ENCODE measurements at regions of chr3 and their contacts with region 1.

Region 1: GRCh38 chr3:53114011-53114400 is 16.2 kb downstream of the RFT1 start:
- DNase-seq: no peak
- H3K4me3 ChIP-seq: no peak overlapping the region
- CTCF ChIP-seq: peak; percentile 92

Region 2: GRCh38 chr3:52792961-52793695 is 320.9 kb before region 1 on chr3:
- CTCF ChIA-PET with region 1: no interaction called
- POLR2A ChIA-PET with region 1: no interaction called
- DNase-seq: no peak
- H3K4me3 ChIP-seq: no peak overlapping the region
- CTCF ChIP-seq: no peak

Region 3: GRCh38 chr3:53102601-53103147 is 11.3 kb before region 1 on chr3:
- CTCF ChIA-PET with region 1: interaction called, 27 read pairs
- POLR2A ChIA-PET with region 1: no interaction called
- DNase-seq: no peak
- H3K4me3 ChIP-seq: no peak overlapping the region
- CTCF ChIP-seq: no peak

Region 4: DNA sequence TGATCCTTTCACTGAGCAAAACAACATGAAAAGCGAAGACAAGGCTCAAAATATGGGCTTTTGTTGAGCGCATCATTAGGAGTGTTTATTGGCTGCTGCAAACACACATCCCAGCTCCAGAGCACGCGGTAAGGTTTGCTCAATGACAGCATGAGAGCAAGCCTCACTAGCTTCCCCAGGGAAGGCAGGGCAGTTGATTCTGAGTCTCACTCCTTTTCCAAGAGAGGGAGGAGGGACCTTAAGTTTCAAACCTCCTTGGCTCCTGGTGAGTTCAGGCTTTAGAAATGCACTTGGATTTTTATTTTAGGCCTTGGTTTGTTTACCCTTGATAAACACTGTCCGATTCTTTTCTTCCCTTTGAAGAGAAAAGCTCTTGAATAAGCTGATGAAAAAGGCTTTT is 939.2 kb after region 1 on chr3:
- CTCF ChIA-PET with region 1: no interaction called
- POLR2A ChIA-PET with region 1: no interaction called
- DNase-seq: no peak
- H3K4me3 ChIP-seq: no peak overlapping the region
- CTCF ChIP-seq: no peak

Measured in AG04449 (cell line).